IMR-90 (cell line): ENCODE measurements at regions of chr5 and their contacts with region 1.

Region 1: GRCh38 chr5:78648359-78649210 is at the start of gene LHFPL2:
- DNase-seq: peak; percentile 68
- ATAC-seq: peak; percentile 84
- H3K4me3 ChIP-seq: peak within 1 kb of the TSS; percentile 95
- H3K27ac ChIP-seq: peak within 1 kb of the TSS; percentile 96
- H3K4me1 ChIP-seq: peaks cover 14% of the 10 kb centered on the region
- H3K27me3 ChIP-seq: no peaks in the 10 kb centered on the region
- CTCF ChIP-seq: no peak
- POLR2A ChIP-seq: peak; percentile 63
- RAD21 ChIP-seq: no peak
- total RNA-seq, gene LHFPL2: 11.1 and 11.3 TPM in 2 replicates

Region 2: DNA sequence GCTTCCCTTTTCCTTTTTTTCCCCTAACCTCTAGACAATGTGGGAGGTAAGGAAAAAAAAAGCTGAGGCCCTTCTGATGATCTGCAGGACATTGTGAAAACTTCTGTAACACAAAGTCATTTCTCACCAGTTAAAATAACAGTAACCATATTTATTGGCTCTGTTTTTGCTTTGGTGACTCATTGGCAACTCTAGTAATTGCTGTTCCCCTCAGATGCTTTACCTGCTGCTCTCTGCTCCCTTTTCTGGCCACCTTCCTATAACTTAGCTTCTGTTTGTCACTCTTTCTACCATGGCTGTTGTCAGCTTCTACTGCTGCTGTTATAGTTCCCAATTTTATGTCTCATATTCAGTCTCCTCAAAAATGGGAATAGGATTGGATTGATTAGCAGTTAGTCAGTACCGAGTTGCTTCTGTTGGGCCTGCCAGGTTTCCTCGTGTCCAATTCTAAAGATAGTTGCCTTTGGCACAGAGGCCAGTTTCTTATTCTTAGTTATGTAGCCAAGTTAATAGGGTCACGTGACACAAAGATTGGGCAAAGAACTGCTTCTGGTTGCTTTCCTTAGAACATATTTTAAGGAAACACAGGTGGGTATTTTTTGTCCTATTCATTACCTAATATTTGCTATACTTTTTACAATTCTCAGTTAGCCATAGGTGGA is 271.4 kb before region 1 on chr5:
- CTCF ChIA-PET with region 1: no interaction called
- POLR2A ChIA-PET with region 1: no interaction called
- dilution Hi-C with region 1: no loop called
- in situ Hi-C with region 1: no loop called
- intact Hi-C with region 1: no loop called
- DNase-seq: peak; percentile 35
- ATAC-seq: no peak
- H3K4me3 ChIP-seq: no peak overlapping the region
- H3K27ac ChIP-seq: no peak overlapping the region
- H3K4me1 ChIP-seq: peaks cover 8% of the 10 kb centered on the region
- H3K27me3 ChIP-seq: no peaks in the 10 kb centered on the region
- CTCF ChIP-seq: no peak
- POLR2A ChIP-seq: no peak
- RAD21 ChIP-seq: no peak

Region 3: DNA sequence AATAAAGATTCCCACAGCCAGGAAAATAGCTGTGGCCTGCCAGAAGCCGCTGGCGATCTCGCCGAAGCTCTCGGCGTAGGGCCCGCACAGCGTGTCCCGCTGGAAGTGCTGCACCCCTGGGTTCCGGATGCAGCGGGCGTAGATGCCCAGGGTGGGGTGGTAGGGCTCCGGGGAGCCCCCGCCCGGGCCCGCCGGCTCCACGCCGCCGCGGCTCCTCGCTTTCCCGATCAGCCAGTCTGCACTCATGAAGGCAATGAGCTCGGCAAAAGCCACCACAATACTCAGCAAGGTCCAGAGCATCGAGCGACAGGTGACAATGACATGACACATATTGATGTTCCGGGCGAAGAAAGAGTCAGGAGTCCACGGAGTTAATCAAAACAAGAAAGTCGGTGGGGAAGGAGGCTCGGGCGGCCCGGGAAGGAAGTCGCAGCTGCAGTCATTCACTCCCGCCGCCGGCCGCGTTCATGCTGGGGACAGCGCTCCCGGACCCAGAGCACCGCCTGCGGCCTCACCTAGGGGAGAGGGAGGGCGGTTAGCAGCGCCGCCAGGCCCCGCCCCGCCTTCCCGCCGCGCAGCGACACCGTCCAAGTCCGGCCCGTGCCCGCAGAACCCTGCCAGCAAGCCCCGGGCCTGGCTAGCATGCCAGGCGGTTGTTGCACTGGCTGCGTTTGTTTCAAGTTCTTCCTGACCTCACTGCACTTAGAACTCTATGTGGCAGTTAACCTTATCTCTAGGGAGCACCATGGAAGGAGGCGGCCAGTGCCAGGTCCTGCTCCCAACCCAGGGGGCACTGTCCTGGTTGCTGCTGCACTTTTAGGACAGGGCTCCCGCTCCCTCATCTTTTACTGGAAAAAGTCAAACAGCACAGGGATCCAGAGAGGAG is 138.5 kb before region 1 on chr5:
- CTCF ChIA-PET with region 1: no interaction called
- POLR2A ChIA-PET with region 1: no interaction called
- dilution Hi-C with region 1: no loop called
- in situ Hi-C with region 1: no loop called
- intact Hi-C with region 1: loop called (anchors 5 kb)
- DNase-seq: no peak
- ATAC-seq: peak; percentile 34
- H3K4me3 ChIP-seq: peak overlapping the region; percentile 9
- H3K27ac ChIP-seq: 0 out of 2 replicates have a peak overlapping the region, but pooled peaks have one; percentile 11
- H3K4me1 ChIP-seq: peaks cover 41% of the 10 kb centered on the region
- H3K27me3 ChIP-seq: no peaks in the 10 kb centered on the region
- CTCF ChIP-seq: no peak
- POLR2A ChIP-seq: no peak
- RAD21 ChIP-seq: no peak

Region 4: DNA sequence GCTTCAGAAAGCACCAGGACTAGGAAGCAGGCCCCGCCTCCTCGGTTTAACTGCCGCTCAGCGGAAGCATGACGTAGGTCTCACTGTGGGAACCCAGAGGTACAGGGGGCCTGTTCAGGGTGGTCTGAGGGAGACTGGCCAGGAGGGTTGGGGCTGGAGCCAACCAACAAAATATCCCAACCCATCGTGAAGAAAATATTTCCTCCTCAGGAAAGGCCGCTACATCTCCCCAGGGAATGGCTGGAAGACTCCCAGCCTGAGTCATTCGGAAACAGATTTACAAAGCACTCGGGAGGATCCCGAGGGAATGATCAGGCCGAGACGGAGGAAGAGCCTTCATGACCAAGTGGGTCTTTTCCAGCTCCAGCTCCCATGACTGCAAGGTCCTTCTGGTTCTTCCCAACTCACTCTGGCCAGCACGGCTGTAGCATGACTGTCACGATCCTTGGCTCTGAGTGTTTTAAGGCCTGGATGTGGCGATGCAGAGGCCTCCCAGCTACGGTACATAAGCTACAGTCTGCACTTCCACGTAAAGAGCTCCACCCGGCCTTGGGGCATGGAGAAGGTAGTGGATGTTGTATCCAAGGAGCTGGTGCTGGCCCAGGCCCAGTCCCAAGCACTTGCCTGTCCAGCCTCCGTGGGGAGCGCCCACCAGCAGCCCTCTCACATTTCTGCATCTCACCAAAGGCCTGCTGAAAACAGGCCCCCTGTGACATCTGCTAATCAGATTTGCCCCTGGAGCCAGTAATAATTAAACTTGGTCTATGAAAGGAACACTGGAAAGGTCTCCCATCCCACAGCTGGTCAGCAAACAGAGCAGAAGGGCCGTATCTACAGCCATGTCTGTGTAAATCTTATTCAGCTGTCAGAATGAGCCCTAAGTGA is 100.6 kb before region 1 on chr5:
- CTCF ChIA-PET with region 1: no interaction called
- POLR2A ChIA-PET with region 1: no interaction called
- dilution Hi-C with region 1: no loop called
- in situ Hi-C with region 1: no loop called
- intact Hi-C with region 1: loop called (anchors 5 kb)
- DNase-seq: peak; percentile 84
- ATAC-seq: peak; percentile 42
- H3K4me3 ChIP-seq: no peak overlapping the region
- H3K27ac ChIP-seq: peak overlapping the region; percentile 86
- H3K4me1 ChIP-seq: peaks cover 30% of the 10 kb centered on the region
- H3K27me3 ChIP-seq: no peaks in the 10 kb centered on the region
- CTCF ChIP-seq: no peak
- POLR2A ChIP-seq: no peak
- RAD21 ChIP-seq: no peak

Region 5: GRCh38 chr5:78717674-78718625 is 69.4 kb after region 1 on chr5:
- CTCF ChIA-PET with region 1: no interaction called
- POLR2A ChIA-PET with region 1: no interaction called
- dilution Hi-C with region 1: no loop called
- in situ Hi-C with region 1: no loop called
- intact Hi-C with region 1: no loop called
- DNase-seq: peak; percentile 80
- ATAC-seq: peak; percentile 79
- H3K4me3 ChIP-seq: no peak overlapping the region
- H3K27ac ChIP-seq: peak overlapping the region; percentile 32; the same call in 1 of the 2 replicates
- H3K4me1 ChIP-seq: peaks cover 32% of the 10 kb centered on the region
- H3K27me3 ChIP-seq: no peaks in the 10 kb centered on the region
- CTCF ChIP-seq: no peak
- POLR2A ChIP-seq: no peak
- RAD21 ChIP-seq: no peak

Region 6: DNA sequence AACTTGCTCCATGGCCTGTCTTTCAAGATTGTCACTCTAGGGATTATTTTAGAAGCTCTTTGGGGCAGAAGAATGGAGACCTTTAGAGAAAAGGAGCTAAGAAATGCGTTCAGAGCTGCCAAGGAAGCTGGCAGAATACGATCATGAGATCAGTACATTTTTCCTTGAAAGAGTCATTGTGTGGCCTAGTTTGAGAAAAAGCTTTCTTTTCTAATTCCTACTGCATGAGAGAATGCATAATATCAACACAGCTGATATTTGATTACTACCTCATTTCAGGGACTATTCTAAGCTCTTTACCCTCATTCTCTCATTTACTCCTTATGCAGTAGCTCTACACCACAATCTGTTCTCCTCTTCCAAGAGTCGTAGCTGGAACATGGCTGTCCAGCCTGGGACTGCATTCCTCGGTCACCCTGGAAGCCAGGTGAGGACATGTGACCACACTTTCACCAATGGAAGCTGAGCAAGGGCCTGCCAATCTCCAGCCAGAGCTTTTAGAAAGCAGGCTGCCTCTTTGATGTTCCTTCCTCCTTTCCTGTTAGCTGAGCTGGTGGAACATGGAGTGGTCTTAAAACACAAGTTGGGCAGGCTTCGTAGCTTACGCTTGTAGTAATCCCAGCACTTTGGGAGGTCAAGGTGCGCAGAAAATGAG is 99.2 kb after region 1 on chr5:
- CTCF ChIA-PET with region 1: no interaction called
- POLR2A ChIA-PET with region 1: no interaction called
- dilution Hi-C with region 1: no loop called
- in situ Hi-C with region 1: no loop called
- intact Hi-C with region 1: loop called (anchors 1 kb)
- DNase-seq: peak; percentile 94
- ATAC-seq: peak; percentile 92
- H3K4me3 ChIP-seq: no peak overlapping the region
- H3K27ac ChIP-seq: peak overlapping the region; percentile 94
- H3K4me1 ChIP-seq: peaks cover 17% of the 10 kb centered on the region
- H3K27me3 ChIP-seq: peaks cover 6% of the 10 kb centered on the region; the same call in 1 of the 2 replicates
- CTCF ChIP-seq: no peak
- POLR2A ChIP-seq: no peak
- RAD21 ChIP-seq: 0 out of 2 replicates have a peak, but pooled peaks have one; percentile 15

Region 7: GRCh38 chr5:78795757-78796156 is 147.2 kb after region 1 on chr5:
- CTCF ChIA-PET with region 1: no interaction called
- POLR2A ChIA-PET with region 1: no interaction called
- dilution Hi-C with region 1: no loop called
- in situ Hi-C with region 1: no loop called
- intact Hi-C with region 1: no loop called
- DNase-seq: no peak
- ATAC-seq: no peak
- H3K4me3 ChIP-seq: no peak overlapping the region
- H3K27ac ChIP-seq: no peak overlapping the region
- H3K4me1 ChIP-seq: peaks cover 13% of the 10 kb centered on the region
- H3K27me3 ChIP-seq: no peaks in the 10 kb centered on the region
- CTCF ChIP-seq: no peak
- POLR2A ChIP-seq: no peak
- RAD21 ChIP-seq: no peak

Region 8: DNA sequence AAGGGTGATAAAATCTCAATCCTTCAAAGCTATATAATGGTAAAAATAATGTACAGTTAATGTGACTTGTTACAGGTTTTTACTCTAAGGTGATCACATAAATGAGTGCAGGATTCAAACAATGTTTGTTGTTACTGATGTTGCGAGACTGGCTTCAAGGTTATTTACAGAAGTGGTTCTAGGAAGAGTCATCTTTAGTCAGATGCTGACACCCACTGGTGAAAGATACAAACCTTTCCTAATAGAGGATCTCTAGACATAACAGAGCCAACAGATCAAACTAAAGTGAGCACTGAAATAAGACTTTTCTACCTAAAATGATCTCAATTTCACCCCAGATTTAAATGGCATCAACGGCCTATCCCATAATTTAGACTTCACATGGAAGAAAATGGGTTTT is 316.3 kb after region 1 on chr5:
- CTCF ChIA-PET with region 1: no interaction called
- POLR2A ChIA-PET with region 1: no interaction called
- dilution Hi-C with region 1: no loop called
- in situ Hi-C with region 1: no loop called
- intact Hi-C with region 1: loop called (anchors 5 kb)
- DNase-seq: peak; percentile 83
- ATAC-seq: peak; percentile 87
- H3K4me3 ChIP-seq: no peak overlapping the region
- H3K27ac ChIP-seq: no peak overlapping the region
- H3K4me1 ChIP-seq: no peaks in the 10 kb centered on the region
- H3K27me3 ChIP-seq: no peaks in the 10 kb centered on the region
- CTCF ChIP-seq: peak; percentile 80
- POLR2A ChIP-seq: 0 out of 2 replicates have a peak, but pooled peaks have one; percentile 20
- RAD21 ChIP-seq: peak; percentile 86